Activated T-helper 2 cell treated with anti-CD3 and anti-CD28 coated beads, Interferon-gamma antibody, Interleukin-2, Interleukin-4, amounts not matched to agents 10 μg/mL and 5 μg/mL and 100 μg/mL, durations not matched to agents 14 hours and 24 hours and 36 hours (primary cell): ENCODE measurements at regions of chr5 and their contacts with region 1.

Region 1: GRCh38 chr5:96934708-96935558 is 947 bp upstream of the LNPEP start:
- DNase-seq: peak; percentile 96
- H3K4me3 Mint-ChIP-seq: peak overlapping the region; percentile 88
- H3K27ac Mint-ChIP-seq: peak overlapping the region; percentile 99
- H3K4me1 Mint-ChIP-seq: peaks cover 58% of the 10 kb centered on the region
- H3K27me3 Mint-ChIP-seq: no peaks in the 10 kb centered on the region

Region 2: GRCh38 chr5:95961617-95962474 is 973.1 kb before region 1 on chr5 and contains the start of gene ELL2:
- intact Hi-C with region 1: loop called (anchors 1 kb)
- DNase-seq: peak; percentile 94
- H3K4me3 Mint-ChIP-seq: peak within 1 kb of the TSS; percentile 92
- H3K27ac Mint-ChIP-seq: peak within 1 kb of the TSS; percentile 98
- H3K4me1 Mint-ChIP-seq: peaks cover 51% of the 10 kb centered on the region
- H3K27me3 Mint-ChIP-seq: no peaks in the 10 kb centered on the region
- total RNA-seq, gene ELL2: 124 and 135 TPM in 2 replicates

Region 3: GRCh38 chr5:96177303-96177869 is 757.5 kb before region 1 on chr5:
- intact Hi-C with region 1: no loop called
- DNase-seq: no peak
- H3K4me3 Mint-ChIP-seq: no peak overlapping the region
- H3K27ac Mint-ChIP-seq: no peak overlapping the region
- H3K4me1 Mint-ChIP-seq: peaks cover 3% of the 10 kb centered on the region
- H3K27me3 Mint-ChIP-seq: no peaks in the 10 kb centered on the region

Region 4: DNA sequence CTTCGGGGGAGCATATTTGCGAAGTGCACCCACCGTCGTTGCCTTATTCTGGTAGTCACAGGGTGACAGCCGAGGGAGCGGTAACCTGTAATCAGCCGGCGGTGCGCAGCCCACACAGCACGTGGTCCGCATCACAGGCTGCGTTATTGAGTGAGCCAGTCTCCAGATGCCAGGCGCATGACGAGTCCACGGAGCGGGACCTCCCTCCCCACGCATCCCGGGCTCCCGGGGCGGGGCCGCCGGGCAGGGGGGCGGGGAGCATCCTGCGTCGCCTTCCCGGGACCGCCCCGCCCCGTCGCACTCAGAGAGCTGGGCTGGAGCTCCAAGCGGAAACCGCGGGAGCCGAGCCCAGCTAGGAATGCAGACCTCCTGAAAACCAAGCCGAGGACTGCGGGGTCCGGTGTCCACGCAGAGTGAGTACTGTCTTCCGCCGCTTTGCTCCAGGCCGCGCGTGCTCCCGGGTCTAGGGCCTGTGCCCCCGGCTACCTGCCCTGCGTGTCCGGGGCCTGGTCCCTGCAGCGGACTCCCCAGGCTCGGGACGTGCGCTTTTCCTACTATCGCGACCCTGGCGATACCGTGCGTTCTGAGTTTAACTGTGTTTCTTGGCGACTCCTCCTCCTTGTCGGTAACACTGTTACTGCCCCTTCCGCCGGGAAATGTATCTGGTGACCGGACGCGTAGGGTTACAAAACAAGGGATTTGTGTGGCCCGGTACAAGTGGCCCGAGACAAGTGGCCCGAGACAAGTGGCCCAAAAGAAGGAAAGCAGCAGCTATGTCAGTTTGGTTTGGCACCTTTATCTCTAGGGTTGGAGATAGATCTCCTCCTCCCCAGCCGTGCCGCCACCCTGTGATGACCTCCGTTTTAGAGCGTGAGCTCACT is 232.2 kb before region 1 on chr5:
- intact Hi-C with region 1: loop called (anchors 2 kb)
- DNase-seq: peak; percentile 61
- H3K4me3 Mint-ChIP-seq: peak overlapping the region; percentile 88
- H3K27ac Mint-ChIP-seq: peak overlapping the region; percentile 83
- H3K4me1 Mint-ChIP-seq: peaks cover 35% of the 10 kb centered on the region
- H3K27me3 Mint-ChIP-seq: no peaks in the 10 kb centered on the region

Region 5: GRCh38 chr5:96896806-96897205 is 38.1 kb before region 1 on chr5:
- intact Hi-C with region 1: loop called (anchors 1 kb)
- DNase-seq: no peak
- H3K4me3 Mint-ChIP-seq: peak overlapping the region; percentile 82
- H3K27ac Mint-ChIP-seq: peak overlapping the region; percentile 96
- H3K4me1 Mint-ChIP-seq: peaks cover 50% of the 10 kb centered on the region
- H3K27me3 Mint-ChIP-seq: no peaks in the 10 kb centered on the region

Region 6: GRCh38 chr5:96963267-96963666 is 28.3 kb after region 1 on chr5:
- intact Hi-C with region 1: loop called (anchors 1 kb)
- DNase-seq: no peak
- H3K4me3 Mint-ChIP-seq: peak overlapping the region; percentile 76
- H3K27ac Mint-ChIP-seq: peak overlapping the region; percentile 95
- H3K4me1 Mint-ChIP-seq: peaks cover 62% of the 10 kb centered on the region
- H3K27me3 Mint-ChIP-seq: no peaks in the 10 kb centered on the region

Region 7: DNA sequence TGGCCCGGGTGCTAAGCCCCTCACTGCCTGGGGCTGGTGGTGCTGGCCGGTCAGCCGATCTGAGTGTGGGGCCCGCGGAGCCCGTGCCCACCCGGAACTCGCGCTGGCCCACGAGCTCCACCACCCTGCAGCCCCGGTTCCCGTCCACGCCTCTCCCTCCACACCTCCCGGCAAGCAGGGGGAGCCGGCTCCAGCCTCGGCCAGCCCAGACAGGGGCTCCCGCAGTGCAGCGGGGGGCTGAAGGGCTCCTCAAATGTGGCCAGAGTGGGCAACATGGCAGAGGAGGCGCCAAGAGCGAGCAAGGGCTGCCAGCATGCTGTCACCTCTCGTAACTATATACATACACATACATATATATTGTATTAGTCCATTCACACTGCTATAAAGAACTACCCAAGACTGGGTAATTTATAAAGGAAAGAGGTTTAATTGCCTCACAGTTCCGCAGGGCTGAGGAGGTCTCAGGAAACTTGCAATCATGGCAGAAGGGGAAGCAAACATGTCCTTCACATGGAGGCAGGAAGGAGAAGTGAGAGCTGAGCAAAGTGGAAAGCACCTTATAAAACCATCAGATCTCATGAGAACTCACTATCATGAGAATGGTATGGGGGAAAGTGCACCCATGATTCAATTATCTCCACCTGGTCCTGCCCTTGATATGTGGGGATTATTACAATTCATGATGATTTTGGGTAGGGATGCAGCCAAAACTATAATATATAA is 150.7 kb after region 1 on chr5:
- intact Hi-C with region 1: no loop called
- DNase-seq: no peak
- H3K4me3 Mint-ChIP-seq: no peak overlapping the region
- H3K27ac Mint-ChIP-seq: no peak overlapping the region
- H3K4me1 Mint-ChIP-seq: peaks cover 8% of the 10 kb centered on the region
- H3K27me3 Mint-ChIP-seq: peaks cover 26% of the 10 kb centered on the region

Region 8: DNA sequence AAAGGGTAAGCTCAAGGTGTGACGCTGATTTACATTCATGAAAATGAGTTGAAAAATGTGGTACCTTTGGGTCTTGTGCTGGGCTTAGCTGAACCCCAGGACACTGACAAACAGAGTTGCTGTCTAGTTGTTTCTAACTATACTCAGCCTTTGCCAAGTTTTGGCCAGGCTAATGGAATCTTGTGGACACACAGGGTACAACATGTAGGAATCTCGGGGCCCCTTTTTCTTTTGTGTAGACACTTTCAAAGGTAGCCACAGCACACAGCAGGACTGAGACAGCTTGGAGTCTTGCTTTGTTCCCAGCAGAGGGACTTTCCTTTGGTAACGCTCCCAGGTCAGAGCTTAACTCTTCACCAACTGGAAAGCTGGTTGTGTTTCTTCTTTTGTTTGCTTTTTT is 199.7 kb after region 1 on chr5:
- intact Hi-C with region 1: loop called (anchors 5 kb)
- DNase-seq: no peak
- H3K4me3 Mint-ChIP-seq: no peak overlapping the region
- H3K27ac Mint-ChIP-seq: no peak overlapping the region
- H3K4me1 Mint-ChIP-seq: peaks cover 21% of the 10 kb centered on the region
- H3K27me3 Mint-ChIP-seq: peaks cover 13% of the 10 kb centered on the region

Region 9: DNA sequence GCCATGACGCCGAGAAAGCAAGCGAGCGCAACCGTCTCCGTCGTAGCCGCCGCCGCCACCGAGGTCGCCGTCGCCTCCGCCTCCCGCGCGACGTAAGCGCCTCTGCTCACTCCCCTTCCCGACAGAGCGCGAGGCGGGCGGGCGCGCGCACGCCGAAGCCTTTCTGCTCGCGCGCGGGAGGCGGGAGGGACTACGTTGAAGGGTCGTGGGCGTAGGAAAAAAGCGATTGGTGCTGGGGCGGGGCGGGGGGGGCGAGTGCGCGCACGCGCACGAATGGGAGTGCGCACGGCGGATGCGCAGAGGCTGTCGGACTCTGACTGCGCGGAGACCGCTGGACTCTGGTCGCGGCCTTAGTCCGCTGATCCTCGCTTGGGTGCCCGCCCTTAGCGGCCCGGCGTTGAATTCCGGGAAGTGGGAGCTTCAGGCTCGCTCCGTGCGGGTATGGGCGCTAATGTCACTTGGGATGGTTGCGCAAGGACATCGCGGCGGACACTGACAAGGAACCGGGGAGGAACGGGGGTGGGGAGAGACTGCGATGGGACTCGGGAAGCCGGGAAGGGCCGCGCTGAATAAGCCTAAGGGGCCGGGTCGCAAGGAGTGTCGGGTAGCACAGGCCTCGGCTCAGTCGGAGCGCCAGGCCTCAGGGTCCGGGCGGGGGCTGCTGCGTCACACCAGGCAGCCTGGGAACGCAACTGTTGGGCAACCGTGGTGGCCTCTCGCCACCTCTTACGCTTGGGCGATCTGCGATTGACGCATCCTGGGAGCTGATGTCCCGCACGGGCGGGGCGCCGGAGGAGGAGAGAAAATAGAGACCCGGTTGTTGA is 1994.2 kb after region 1 on chr5 and contains the start of gene CHD1:
- intact Hi-C with region 1: loop called (anchors 10 kb)
- DNase-seq: peak; percentile 92
- H3K4me3 Mint-ChIP-seq: peak within 1 kb of the TSS; percentile 98
- H3K27ac Mint-ChIP-seq: peak within 1 kb of the TSS; percentile 99
- H3K4me1 Mint-ChIP-seq: peaks cover 41% of the 10 kb centered on the region
- H3K27me3 Mint-ChIP-seq: no peaks in the 10 kb centered on the region
- total RNA-seq, gene CHD1: 67.6 and 72.1 TPM in 2 replicates